Activated naive CD4-positive, alpha-beta T cell treated with anti-CD3 and anti-CD28 coated beads for 36 hours (primary cell): ENCODE measurements at regions of chr14 and their contacts with region 1.

Region 1: DNA sequence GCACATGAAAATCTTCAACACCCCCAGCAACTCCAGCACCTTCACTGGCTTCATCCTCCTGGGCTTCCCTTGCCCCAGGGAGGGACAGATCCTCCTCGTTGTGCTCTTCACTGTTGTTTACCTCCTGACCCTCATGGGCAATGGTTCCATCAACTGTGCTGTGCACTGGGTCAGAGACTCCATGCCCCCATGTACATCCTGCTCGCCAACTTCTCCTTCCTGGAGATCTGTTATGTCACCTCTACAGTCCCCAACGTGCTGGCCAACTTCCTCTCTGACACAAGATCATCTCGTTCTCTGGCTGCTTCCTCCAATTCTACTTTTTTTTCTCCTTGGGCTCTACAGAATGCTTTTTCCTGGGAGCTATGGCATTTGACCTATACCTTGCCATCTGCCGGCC is 11.5 kb upstream of the OR11G2 start:
- DNase-seq: no peak
- H3K4me3 Mint-ChIP-seq: no peak overlapping the region
- H3K27ac Mint-ChIP-seq: no peak overlapping the region
- H3K4me1 Mint-ChIP-seq: no peaks in the 10 kb centered on the region
- H3K27me3 Mint-ChIP-seq: peaks cover 3% of the 10 kb centered on the region

Region 2: GRCh38 chr14:20002319-20002718 is 176.9 kb before region 1 on chr14:
- CTCF ChIA-PET with region 1: no interaction called
- intact Hi-C with region 1: no loop called
- DNase-seq: no peak
- H3K4me3 Mint-ChIP-seq: no peak overlapping the region
- H3K27ac Mint-ChIP-seq: no peak overlapping the region
- H3K4me1 Mint-ChIP-seq: no peaks in the 10 kb centered on the region
- H3K27me3 Mint-ChIP-seq: no peaks in the 10 kb centered on the region

Region 3: GRCh38 chr14:20031058-20031457 is 148.2 kb before region 1 on chr14:
- CTCF ChIA-PET with region 1: no interaction called
- intact Hi-C with region 1: loop called (anchors 5 kb)
- DNase-seq: no peak
- H3K4me3 Mint-ChIP-seq: no peak overlapping the region
- H3K27ac Mint-ChIP-seq: no peak overlapping the region
- H3K4me1 Mint-ChIP-seq: no peaks in the 10 kb centered on the region
- H3K27me3 Mint-ChIP-seq: no peaks in the 10 kb centered on the region

Region 4: DNA sequence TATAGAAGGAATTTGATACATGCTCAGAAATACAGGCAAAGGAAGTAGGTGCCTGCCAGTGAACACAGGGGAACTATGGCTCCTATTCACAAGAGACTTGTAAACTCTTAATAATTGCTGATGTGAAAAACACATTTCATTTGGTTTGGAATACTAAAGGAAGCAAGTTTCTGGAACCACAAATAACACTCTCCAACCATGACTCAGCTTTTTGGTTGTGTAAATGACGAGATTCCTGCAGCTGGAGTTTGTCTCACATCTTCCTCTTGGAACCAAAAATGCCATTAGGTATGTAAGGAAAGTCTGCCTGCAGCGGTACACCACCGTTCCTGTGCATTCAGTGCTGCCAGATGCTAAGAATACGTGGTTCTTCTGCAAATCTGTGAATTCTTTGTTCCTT is 39.8 kb after region 1 on chr14:
- CTCF ChIA-PET with region 1: no interaction called
- intact Hi-C with region 1: no loop called
- DNase-seq: no peak
- H3K4me3 Mint-ChIP-seq: no peak overlapping the region
- H3K27ac Mint-ChIP-seq: no peak overlapping the region
- H3K4me1 Mint-ChIP-seq: no peaks in the 10 kb centered on the region
- H3K27me3 Mint-ChIP-seq: peaks cover 2% of the 10 kb centered on the region